ENCODE measurements at regions of chr7 and their contacts with region 1.

Region 1: DNA sequence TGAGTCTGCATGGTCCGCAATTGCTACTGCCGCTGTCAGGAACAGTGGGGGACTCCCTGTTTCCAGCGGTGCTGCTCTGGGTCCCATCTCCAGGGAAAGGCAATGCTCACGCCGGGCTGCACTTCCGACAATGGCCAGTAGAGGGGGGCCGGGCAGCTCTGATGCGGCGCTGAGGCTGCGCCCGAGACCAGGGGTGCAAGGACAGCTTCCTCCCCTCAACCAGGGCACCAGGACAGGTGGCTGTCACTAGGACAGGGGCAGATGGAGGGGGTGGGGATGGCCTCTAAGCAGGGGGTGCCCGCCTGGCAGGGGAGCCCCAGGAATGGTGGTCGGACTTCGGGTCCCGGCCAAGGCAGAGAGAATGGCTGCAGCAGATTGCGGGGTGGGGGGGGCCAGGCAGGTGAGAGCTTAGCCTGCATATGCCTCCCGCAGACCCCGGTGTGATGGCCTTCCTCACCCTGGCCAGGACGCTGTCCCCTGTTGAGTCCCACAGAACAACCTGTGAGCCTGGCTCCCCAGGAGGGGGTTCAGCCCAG is 71.0 kb upstream of the KCTD7 start:
- DNase-seq: peak; percentile 53 to 97 (median 82)

Region 2: GRCh38 chr7:66013916-66014315 is 543.8 kb before region 1 on chr7:
- intact Hi-C with region 1: no loop called
- DNase-seq: peak in 3 of 10 donors; percentile 3 to 64 (median 9)

Region 3: DNA sequence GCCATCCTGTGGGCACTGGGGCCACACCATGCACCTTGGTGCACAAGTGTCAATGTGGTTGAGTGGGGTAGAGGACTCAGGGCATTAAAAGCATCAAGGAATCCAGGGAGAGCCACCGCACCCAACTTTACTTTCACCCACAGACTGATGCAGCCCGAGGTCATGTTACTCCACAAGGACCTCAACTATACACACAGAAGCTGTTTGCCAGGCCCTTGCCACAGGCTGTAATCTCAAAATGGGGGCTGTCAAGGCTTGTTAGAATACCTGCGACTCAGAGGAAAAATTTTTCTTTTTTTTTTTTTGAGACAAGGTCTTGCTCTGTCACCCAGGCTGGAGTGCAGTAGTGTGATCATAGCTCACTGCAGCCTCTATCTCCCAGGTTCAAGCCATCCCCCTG is 44.5 kb after region 1 on chr7:
- intact Hi-C with region 1: no loop called
- DNase-seq: peak in 1 of 10 donors; percentile 23

Region 4: DNA sequence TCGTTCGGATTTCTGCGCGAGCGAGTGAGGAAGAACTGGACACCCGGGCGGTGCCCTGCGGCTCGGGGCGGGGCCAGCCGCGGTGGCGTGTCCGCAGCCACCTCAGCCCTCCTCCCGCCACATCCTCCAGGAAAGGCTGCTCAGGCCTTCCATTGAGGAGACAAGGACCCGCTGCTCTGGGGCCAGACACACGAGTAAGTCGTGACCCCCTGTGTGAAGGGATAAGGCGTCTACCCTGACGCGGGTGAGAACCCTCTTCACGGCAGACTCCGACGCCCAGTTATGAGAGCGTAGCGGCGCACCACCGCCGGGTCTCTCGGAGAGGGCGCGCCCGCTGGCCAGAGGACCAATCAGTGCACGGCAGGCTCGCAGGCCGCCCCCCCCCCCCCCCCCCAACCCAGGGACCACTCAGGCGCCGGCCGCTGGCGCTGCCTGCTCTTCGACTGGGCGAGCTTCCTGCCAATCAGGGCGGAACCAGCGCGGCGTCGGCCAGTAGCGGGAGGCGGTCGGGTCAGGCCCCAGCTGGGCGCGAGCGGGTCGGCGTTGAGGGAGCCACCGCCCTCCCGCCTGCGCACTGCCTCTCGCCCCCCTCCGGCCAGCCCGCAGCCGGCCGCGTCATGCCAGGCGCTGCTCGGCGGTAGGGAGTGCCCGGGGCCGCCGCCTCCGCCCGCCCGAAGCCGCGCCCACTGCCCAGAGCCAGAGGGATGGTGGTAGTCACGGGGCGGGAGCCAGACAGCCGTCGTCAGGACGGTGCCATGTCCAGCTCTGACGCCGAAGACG is 70.9 kb after region 1 on chr7 and contains the start of gene KCTD7:
- intact Hi-C with region 1: loop called (anchors 5 kb)
- DNase-seq: peak; percentile 96 to 100 (median 99)

Region 5: GRCh38 chr7:66697449-66698438 is 140.1 kb after region 1 on chr7:
- intact Hi-C with region 1: loop called (anchors 10 kb)
- DNase-seq: peak; percentile 43 to 94 (median 72)

Measured in posterior cingulate gyrus (tissue), 11 donors.